AG04449 (cell line): ENCODE measurements at regions of chr19 and their contacts with region 1.

Region 1: DNA sequence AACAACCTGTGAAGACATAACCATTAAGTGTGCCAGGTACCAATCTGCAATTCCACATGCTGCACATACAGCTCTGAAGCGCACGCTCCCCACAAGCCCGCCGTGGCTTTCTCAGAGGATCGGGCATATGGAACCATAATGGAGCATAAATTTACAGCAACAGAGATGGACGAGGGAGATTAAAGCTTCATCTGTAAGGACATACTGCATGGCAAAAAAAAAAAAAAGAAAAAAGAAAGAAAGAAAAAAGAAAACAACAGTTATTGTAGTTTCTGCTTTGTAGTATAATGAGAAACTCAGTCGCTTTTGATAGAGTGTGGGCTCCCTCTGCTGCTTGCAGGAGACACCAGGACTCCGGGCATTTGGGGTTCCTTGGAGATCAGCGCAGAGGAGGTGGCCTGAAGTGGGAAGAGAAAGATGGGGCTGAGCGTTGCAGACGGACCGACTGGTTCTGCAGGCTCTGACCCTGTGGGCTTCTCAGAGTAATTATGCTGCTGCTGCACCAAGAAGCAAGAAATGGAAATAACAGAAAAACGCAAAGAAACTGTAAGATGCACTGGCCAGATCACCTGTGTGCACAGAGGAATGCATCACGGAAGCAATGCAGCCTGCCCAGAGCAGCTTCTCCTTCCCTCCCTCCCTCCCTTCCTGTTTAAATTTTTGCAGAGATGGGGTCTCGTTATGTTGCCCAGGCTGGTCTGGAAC is 10.8 kb upstream of the PDCD5 start:
- DNase-seq: peak; percentile 5
- H3K4me3 ChIP-seq: peak overlapping the region; percentile 24; the same call in 1 of the 2 replicates
- CTCF ChIP-seq: peak; percentile 71

Region 2: DNA sequence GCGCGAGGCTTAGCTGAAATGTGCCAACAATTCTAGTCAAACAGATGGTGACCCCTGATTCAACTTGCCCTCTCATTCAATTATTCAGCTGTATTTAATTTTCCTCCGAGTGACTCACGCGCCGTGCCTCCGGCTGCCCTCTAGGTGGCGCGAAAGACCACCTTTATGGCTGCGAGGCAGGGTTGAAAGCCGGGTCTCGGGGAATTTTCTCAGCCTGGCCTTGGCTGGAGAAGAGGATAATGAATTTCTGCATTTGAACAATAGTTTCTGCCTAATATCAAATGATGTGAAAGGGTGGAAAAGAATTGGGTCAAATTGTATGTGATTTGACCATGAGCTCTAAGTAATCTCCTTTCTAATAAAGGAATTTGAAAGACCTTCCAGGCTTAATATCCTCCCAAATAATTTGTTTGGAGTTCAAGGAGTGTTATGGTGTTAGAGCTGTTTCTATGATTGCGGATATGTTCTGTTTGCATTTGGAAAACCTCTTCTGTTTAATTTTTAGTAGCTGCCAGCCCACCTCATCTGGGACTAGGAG is 1887.2 kb before region 1 on chr19:
- CTCF ChIA-PET with region 1: interaction called, 16 read pairs
- POLR2A ChIA-PET with region 1: no interaction called
- DNase-seq: peak; percentile 23
- H3K4me3 ChIP-seq: no peak overlapping the region
- CTCF ChIP-seq: peak; percentile 82

Region 3: GRCh38 chr19:32287811-32288227 is 282.4 kb before region 1 on chr19:
- CTCF ChIA-PET with region 1: interaction called, 42 read pairs
- POLR2A ChIA-PET with region 1: no interaction called
- DNase-seq: no peak
- H3K4me3 ChIP-seq: no peak overlapping the region
- CTCF ChIP-seq: peak; percentile 69

Region 4: DNA sequence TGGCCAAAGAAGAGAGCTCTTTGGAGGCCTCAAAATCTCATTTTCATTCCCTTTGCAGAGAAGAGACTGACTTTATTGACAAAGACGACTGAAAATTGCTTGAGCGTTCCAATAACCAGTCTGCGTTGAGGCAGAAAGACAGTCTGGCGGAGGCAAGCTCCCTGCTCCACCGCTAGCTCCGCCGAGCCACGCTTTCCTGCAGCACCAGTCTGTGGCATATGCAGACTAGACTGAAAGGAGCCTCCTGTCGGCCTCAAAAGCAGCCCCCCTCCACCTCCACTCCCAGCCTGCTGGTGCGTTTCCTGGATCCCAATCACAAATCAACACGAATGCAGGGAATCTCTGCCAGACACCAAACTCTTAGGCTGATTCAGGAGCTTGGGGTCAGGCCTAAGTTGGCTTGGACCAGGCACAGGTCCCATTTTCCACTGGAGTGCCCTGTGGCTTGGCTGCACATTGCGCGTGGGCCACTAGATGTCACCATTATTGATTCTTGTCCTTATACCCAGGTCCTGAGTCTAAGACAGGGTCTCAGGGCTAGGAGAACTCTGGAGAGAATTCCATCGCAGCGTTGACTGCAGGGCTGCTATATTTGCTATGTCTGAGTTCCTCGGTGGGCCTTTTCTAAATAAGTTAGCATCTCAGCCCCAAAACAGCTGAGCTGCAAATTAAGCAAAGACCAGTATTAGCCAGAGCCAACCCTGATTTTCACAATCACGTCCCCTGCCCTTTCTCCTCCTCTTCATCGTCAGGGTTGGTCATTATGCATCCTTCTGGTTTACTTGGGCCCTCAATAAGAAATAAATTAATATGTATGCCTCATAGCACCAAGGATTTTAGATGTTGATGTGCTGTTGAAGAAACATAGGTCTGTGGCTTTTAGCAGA is 230.0 kb before region 1 on chr19:
- CTCF ChIA-PET with region 1: interaction called, 93 read pairs
- POLR2A ChIA-PET with region 1: no interaction called
- DNase-seq: no peak
- H3K4me3 ChIP-seq: no peak overlapping the region
- CTCF ChIP-seq: peak; percentile 70

Region 5: GRCh38 chr19:32464279-32464678 is 106.0 kb before region 1 on chr19:
- CTCF ChIA-PET with region 1: interaction called, 21 read pairs
- POLR2A ChIA-PET with region 1: no interaction called
- DNase-seq: no peak
- H3K4me3 ChIP-seq: no peak overlapping the region
- CTCF ChIP-seq: no peak

Region 6: GRCh38 chr19:32580901-32581703 is 10.9 kb after region 1 on chr19 and contains the start of gene PDCD5:
- CTCF ChIA-PET with region 1: interaction called, 14 read pairs
- POLR2A ChIA-PET with region 1: interaction called, 3 read pairs
- DNase-seq: peak; percentile 10
- H3K4me3 ChIP-seq: peak within 1 kb of the TSS; percentile 86
- CTCF ChIP-seq: no peak